ENCODE measurements at regions of chr9 and their contacts with region 1.

Region 1: GRCh38 chr9:36148311-36149051 is 11.9 kb downstream of the GLIPR2 start:
- DNase-seq: peak; percentile 77
- H3K4me3 ChIP-seq: no peak overlapping the region; the same call in 1 of the 2 replicates
- CTCF ChIP-seq: no peak

Region 2: GRCh38 chr9:36102742-36103495 is 45.6 kb before region 1 on chr9:
- CTCF ChIA-PET with region 1: interaction called, 3 read pairs
- POLR2A ChIA-PET with region 1: interaction called, 12 read pairs
- DNase-seq: no peak
- H3K4me3 ChIP-seq: no peak overlapping the region
- CTCF ChIP-seq: peak; percentile 43

Region 3: GRCh38 chr9:36136272-36136893 is 12.1 kb before region 1 on chr9 and contains the start of gene GLIPR2:
- CTCF ChIA-PET with region 1: interaction called, 9 read pairs
- POLR2A ChIA-PET with region 1: interaction called, 13 read pairs
- DNase-seq: no peak
- H3K4me3 ChIP-seq: peak within 1 kb of the TSS; percentile 64
- CTCF ChIP-seq: peak; percentile 14

Region 4: GRCh38 chr9:36436909-36437308 is 288.4 kb after region 1 on chr9:
- CTCF ChIA-PET with region 1: no interaction called
- POLR2A ChIA-PET with region 1: no interaction called
- DNase-seq: no peak
- H3K4me3 ChIP-seq: no peak overlapping the region
- CTCF ChIP-seq: no peak

Region 5: DNA sequence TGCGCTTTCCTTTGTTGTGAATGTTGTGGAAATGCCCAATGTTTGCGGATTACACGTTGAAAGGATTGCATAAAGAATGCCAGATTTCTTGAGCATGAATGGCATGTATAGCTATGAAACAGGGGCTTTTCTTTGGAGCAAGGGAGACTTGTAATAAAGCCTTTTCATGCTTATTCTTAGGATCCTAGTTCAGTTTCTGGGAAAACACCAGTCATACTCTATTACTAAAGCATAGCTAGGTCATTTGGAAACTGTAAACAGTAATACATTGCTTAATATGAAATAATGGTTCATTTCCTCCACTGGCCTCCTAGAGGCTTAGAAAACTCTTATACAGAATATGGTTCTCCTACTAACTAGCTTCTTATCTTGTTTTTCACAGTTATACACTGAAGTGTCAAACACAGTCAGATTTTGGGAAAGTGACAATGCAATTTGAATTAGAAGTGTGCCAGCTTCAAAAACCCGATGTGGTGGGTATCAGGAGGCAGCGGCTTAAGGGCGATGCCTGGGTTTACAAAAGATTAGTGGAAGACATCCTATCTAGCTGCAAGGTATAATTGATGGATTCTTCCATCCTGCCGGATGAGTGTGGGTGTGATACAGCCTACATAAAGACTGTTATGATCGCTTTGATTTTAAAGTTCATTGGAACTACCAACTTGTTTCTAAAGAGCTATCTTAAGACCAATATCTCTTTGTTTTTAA is 528.5 kb after region 1 on chr9:
- CTCF ChIA-PET with region 1: no interaction called
- POLR2A ChIA-PET with region 1: no interaction called
- DNase-seq: no peak
- H3K4me3 ChIP-seq: no peak overlapping the region
- CTCF ChIP-seq: no peak

Measured in AG04449 (cell line).